ENCODE measurements at regions of chr9 and their contacts with region 1.

Region 1: GRCh38 chr9:98146101-98146991 is 27.3 kb upstream of the TRIM14 start:
- DNase-seq: no peak
- ATAC-seq: peak; percentile 73
- H3K4me3 ChIP-seq: no peak overlapping the region
- H3K27ac ChIP-seq: no peak overlapping the region
- H3K4me1 ChIP-seq: peaks cover 6 to 14% of the 10 kb centered on the region in 2 experiments; a peak in 3 of 4 replicates
- H3K27me3 ChIP-seq: no peaks in the 10 kb centered on the region
- CTCF ChIP-seq: no peak
- POLR2A ChIP-seq: no peak
- RAD21 ChIP-seq: no peak

Region 2: GRCh38 chr9:98087420-98088354 is 58.7 kb before region 1 on chr9:
- CTCF ChIA-PET with region 1: no interaction called
- POLR2A ChIA-PET with region 1: no interaction called
- RAD21 ChIA-PET with region 1: no interaction called
- intact Hi-C with region 1: loop called (anchors 10 kb)
- DNase-seq: no peak
- ATAC-seq: peak; percentile 28; the same call in 1 of the 2 replicates
- H3K4me3 ChIP-seq: no peak overlapping the region
- H3K27ac ChIP-seq: no peak overlapping the region
- H3K4me1 ChIP-seq: no peaks in the 10 kb centered on the region
- H3K27me3 ChIP-seq: no peaks in the 10 kb centered on the region
- CTCF ChIP-seq: no peak
- POLR2A ChIP-seq: no peak
- RAD21 ChIP-seq: no peak

Region 3: GRCh38 chr9:98132806-98133631 is 13.3 kb before region 1 on chr9:
- CTCF ChIA-PET with region 1: no interaction called
- POLR2A ChIA-PET with region 1: no interaction called
- RAD21 ChIA-PET with region 1: no interaction called
- intact Hi-C with region 1: no loop called
- DNase-seq: no peak
- ATAC-seq: no peak
- H3K4me3 ChIP-seq: no peak overlapping the region
- H3K27ac ChIP-seq: no peak overlapping the region
- H3K4me1 ChIP-seq: no peaks in the 10 kb centered on the region
- H3K27me3 ChIP-seq: no peaks in the 10 kb centered on the region
- CTCF ChIP-seq: no peak
- POLR2A ChIP-seq: no peak
- RAD21 ChIP-seq: no peak

Measured in HCT116 (cell line).